ENCODE measurements at regions of chr14 and their contacts with region 1.

Region 1: GRCh38 chr14:22418631-22419030 is 170.4 kb downstream of the DAD1 start:
- DNase-seq: no peak
- ATAC-seq: peak; percentile 43 to 64 (median 55)
- H3K4me3 ChIP-seq: no peak overlapping the region
- H3K4me3 Mint-ChIP-seq: peak overlapping the region; percentile 78
- H3K27ac ChIP-seq: peak overlapping the region; percentile 75
- H3K27ac Mint-ChIP-seq: peak overlapping the region; percentile 91 to 94
- H3K4me1 ChIP-seq: peaks cover 67% of the 10 kb centered on the region
- H3K4me1 Mint-ChIP-seq: peaks cover 73 to 79% of the 10 kb centered on the region in 2 donors
- H3K27me3 ChIP-seq: no peaks in the 10 kb centered on the region
- H3K27me3 Mint-ChIP-seq: no peaks in the 10 kb centered on the region
- CTCF ChIP-seq: no peak

Region 2: GRCh38 chr14:22432348-22432976 is 13.8 kb after region 1 on chr14:
- intact Hi-C with region 1: loop called (anchors 2 kb)
- DNase-seq: no peak
- ATAC-seq: no peak
- H3K4me3 ChIP-seq: no peak overlapping the region
- H3K4me3 Mint-ChIP-seq: peak overlapping the region; percentile 62
- H3K27ac ChIP-seq: no peak overlapping the region
- H3K27ac Mint-ChIP-seq: peak overlapping the region; percentile 89 to 93
- H3K4me1 ChIP-seq: peaks cover 58% of the 10 kb centered on the region
- H3K4me1 Mint-ChIP-seq: peaks cover 69 to 79% of the 10 kb centered on the region in 2 donors
- H3K27me3 ChIP-seq: no peaks in the 10 kb centered on the region
- H3K27me3 Mint-ChIP-seq: no peaks in the 10 kb centered on the region
- CTCF ChIP-seq: no peak

Region 3: GRCh38 chr14:22460461-22461195 is 42.0 kb after region 1 on chr14:
- intact Hi-C with region 1: loop called (anchors 2 kb)
- DNase-seq: peak in 1 of 2 donors; percentile 44
- ATAC-seq: peak; percentile 82 to 94 (median 92)
- H3K4me3 ChIP-seq: peak overlapping the region; percentile 62
- H3K4me3 Mint-ChIP-seq: peak overlapping the region; percentile 96
- H3K27ac ChIP-seq: peak overlapping the region; percentile 79
- H3K27ac Mint-ChIP-seq: peak overlapping the region; percentile 80 to 89
- H3K4me1 ChIP-seq: peaks cover 67% of the 10 kb centered on the region
- H3K4me1 Mint-ChIP-seq: peaks cover 93 to 98% of the 10 kb centered on the region in 2 donors
- H3K27me3 ChIP-seq: no peaks in the 10 kb centered on the region
- H3K27me3 Mint-ChIP-seq: no peaks in the 10 kb centered on the region
- CTCF ChIP-seq: no peak